ENCODE measurements at regions of chr9 and their contacts with region 1.

Region 1: GRCh38 chr9:75408391-75408790 is 320.1 kb downstream of the OSTF1 start:
- DNase-seq: no peak
- ATAC-seq: no peak
- H3K4me3 ChIP-seq: no peak overlapping the region
- H3K27ac ChIP-seq: no peak overlapping the region
- H3K4me1 ChIP-seq: no peaks in the 10 kb centered on the region
- H3K27me3 ChIP-seq: no peaks in the 10 kb centered on the region
- CTCF ChIP-seq: no peak
- POLR2A ChIP-seq: no peak

Region 2: GRCh38 chr9:74773886-74774479 is 634.4 kb before region 1 on chr9:
- intact Hi-C with region 1: no loop called
- DNase-seq: peak; percentile 48 to 75 (median 69)
- ATAC-seq: peak in 3 of 4 donors; percentile 75 to 83 (median 77)
- H3K4me3 ChIP-seq: no peak overlapping the region
- H3K27ac ChIP-seq: no peak overlapping the region
- H3K4me1 ChIP-seq: peaks cover 0 to 5% (median 0%) of the 10 kb centered on the region in 12 donors
- H3K27me3 ChIP-seq: peaks cover 0 to 5% (median 0%) of the 10 kb centered on the region in 9 donors
- CTCF ChIP-seq: peak; percentile 80 to 95 (median 90)
- POLR2A ChIP-seq: no peak

Region 3: GRCh38 chr9:75210215-75210614 is 198.2 kb before region 1 on chr9:
- intact Hi-C with region 1: no loop called
- DNase-seq: no peak
- ATAC-seq: no peak
- H3K4me3 ChIP-seq: no peak overlapping the region
- H3K27ac ChIP-seq: no peak overlapping the region
- H3K4me1 ChIP-seq: no peaks in the 10 kb centered on the region
- H3K27me3 ChIP-seq: no peaks in the 10 kb centered on the region
- CTCF ChIP-seq: no peak
- POLR2A ChIP-seq: no peak

Region 4: DNA sequence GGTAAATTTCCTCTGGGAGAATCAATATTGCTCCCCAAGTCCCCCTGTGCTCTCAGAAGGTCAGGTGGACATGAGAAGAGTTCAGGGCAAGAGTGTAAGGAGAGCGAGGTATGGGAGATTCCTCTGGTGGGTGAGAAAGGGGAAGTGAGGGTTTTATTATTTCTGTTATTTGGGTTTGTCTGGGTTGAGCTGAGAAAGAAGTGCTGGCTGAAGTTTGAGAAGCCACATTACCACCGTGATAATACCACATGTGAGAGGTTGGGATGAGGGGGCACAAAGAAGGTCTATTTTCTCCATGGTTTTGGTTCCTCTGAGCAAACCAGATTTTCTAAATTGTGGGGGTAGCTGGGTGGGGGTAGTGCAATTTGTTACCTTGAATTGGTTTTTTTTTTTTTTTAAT is 30.3 kb after region 1 on chr9:
- intact Hi-C with region 1: no loop called
- DNase-seq: no peak
- ATAC-seq: no peak
- H3K4me3 ChIP-seq: no peak overlapping the region
- H3K27ac ChIP-seq: no peak overlapping the region
- H3K4me1 ChIP-seq: no peaks in the 10 kb centered on the region
- H3K27me3 ChIP-seq: no peaks in the 10 kb centered on the region
- CTCF ChIP-seq: no peak
- POLR2A ChIP-seq: no peak

Region 5: DNA sequence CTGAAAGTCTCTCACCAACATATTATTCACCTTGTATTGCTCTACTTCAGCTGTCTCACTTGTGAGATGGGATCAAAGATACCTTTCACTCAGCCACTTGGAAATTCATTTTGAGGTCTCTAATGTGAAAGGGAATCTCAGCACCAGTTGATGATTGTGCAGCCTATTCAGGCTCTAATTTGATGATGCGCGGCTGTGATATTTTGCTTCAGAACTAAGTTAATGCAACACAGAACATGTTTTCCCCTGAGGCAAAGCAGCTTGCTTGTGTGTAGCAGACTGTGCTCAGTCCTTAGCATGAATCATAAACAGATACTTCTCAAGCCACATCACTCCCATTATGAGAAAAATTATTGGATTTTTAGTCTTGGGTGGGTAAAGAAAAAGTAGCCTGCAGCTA is 58.8 kb after region 1 on chr9:
- intact Hi-C with region 1: loop called in 1 of 10 experiments (anchors 10 kb)
- DNase-seq: no peak
- ATAC-seq: peak in 3 of 4 donors; percentile 45 to 91 (median 70)
- H3K4me3 ChIP-seq: no peak overlapping the region
- H3K27ac ChIP-seq: no peak overlapping the region
- H3K4me1 ChIP-seq: no peaks in the 10 kb centered on the region
- H3K27me3 ChIP-seq: no peaks in the 10 kb centered on the region
- CTCF ChIP-seq: no peak
- POLR2A ChIP-seq: no peak

Measured in heart left ventricle (tissue), 16 donors.